A673 (cell line): ENCODE measurements at regions of chr13 and their contacts with region 1.

Region 1: GRCh38 chr13:98423417-98423816 is 153.5 kb downstream of the STK24 start:
- DNase-seq: no peak
- H3K4me3 ChIP-seq: no peak overlapping the region
- H3K27ac ChIP-seq: no peak overlapping the region
- H3K4me1 ChIP-seq: no peaks in the 10 kb centered on the region
- H3K27me3 ChIP-seq: no peaks in the 10 kb centered on the region
- CTCF ChIP-seq: no peak

Region 2: GRCh38 chr13:99191879-99192399 is 768.5 kb after region 1 on chr13:
- CTCF ChIA-PET with region 1: no interaction called
- POLR2A ChIA-PET with region 1: interaction called, 11 read pairs
- intact Hi-C with region 1: no loop called
- DNase-seq: no peak
- H3K4me3 ChIP-seq: no peak overlapping the region
- H3K27ac ChIP-seq: no peak overlapping the region
- H3K4me1 ChIP-seq: no peaks in the 10 kb centered on the region
- H3K27me3 ChIP-seq: no peaks in the 10 kb centered on the region
- CTCF ChIP-seq: no peak